ENCODE measurements at regions of chr14 and their contacts with region 1.

Region 1: GRCh38 chr14:55731881-55732498 is 152.0 kb downstream of the KTN1 start:
- DNase-seq: peak; percentile 61
- H3K4me3 Mint-ChIP-seq: no peak overlapping the region
- H3K27ac Mint-ChIP-seq: no peak overlapping the region
- H3K4me1 Mint-ChIP-seq: peaks cover 16% of the 10 kb centered on the region
- H3K27me3 Mint-ChIP-seq: peaks cover 2% of the 10 kb centered on the region

Region 2: GRCh38 chr14:55807059-55807499 is 75.1 kb after region 1 on chr14:
- CTCF ChIA-PET with region 1: interaction called, 7 read pairs
- POLR2A ChIA-PET with region 1: interaction called, 10 read pairs
- DNase-seq: peak; percentile 85
- H3K4me3 Mint-ChIP-seq: peak overlapping the region; percentile 35
- H3K27ac Mint-ChIP-seq: peak overlapping the region; percentile 96
- H3K4me1 Mint-ChIP-seq: peaks cover 75% of the 10 kb centered on the region
- H3K27me3 Mint-ChIP-seq: peaks cover 7% of the 10 kb centered on the region

Region 3: GRCh38 chr14:56339855-56340701 is 608.1 kb after region 1 on chr14:
- CTCF ChIA-PET with region 1: interaction called, 11 read pairs
- POLR2A ChIA-PET with region 1: interaction called, 4 read pairs
- DNase-seq: peak; percentile 62
- H3K4me3 Mint-ChIP-seq: no peak overlapping the region
- H3K27ac Mint-ChIP-seq: no peak overlapping the region
- H3K4me1 Mint-ChIP-seq: peaks cover 6% of the 10 kb centered on the region
- H3K27me3 Mint-ChIP-seq: no peaks in the 10 kb centered on the region

Region 4: DNA sequence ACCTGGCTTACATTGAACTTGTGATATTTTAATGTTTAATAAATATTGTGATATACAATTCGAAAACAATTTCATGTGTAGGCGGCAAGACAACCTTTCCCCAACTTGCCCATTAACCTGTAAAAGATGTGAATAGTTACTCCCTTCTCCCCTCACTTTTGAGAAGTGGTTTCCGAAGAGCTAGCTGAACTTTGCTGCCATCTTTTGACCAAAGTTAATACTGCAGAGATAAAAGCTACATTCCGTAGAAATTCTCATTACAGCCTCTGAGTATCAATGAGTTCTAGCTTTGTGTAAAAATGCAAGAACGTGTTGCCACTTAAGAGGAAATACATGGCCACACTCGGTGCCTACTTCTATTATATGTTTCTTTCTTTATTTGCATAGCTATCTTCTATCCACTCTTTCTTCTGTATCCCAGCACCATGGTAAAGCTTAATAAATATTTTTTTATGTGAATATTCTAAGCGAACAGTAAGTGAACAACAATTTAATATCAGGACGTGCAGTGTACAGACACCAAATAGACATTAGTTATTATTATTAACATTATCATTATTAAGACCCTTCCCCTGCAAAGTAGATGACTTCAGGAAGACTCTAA is 742.5 kb after region 1 on chr14:
- CTCF ChIA-PET with region 1: interaction called, 16 read pairs
- POLR2A ChIA-PET with region 1: no interaction called
- DNase-seq: no peak
- H3K4me3 Mint-ChIP-seq: no peak overlapping the region
- H3K27ac Mint-ChIP-seq: no peak overlapping the region
- H3K4me1 Mint-ChIP-seq: no peaks in the 10 kb centered on the region
- H3K27me3 Mint-ChIP-seq: peaks cover 10% of the 10 kb centered on the region